ENCODE measurements at regions of chr17 and their contacts with region 1.

Region 1: DNA sequence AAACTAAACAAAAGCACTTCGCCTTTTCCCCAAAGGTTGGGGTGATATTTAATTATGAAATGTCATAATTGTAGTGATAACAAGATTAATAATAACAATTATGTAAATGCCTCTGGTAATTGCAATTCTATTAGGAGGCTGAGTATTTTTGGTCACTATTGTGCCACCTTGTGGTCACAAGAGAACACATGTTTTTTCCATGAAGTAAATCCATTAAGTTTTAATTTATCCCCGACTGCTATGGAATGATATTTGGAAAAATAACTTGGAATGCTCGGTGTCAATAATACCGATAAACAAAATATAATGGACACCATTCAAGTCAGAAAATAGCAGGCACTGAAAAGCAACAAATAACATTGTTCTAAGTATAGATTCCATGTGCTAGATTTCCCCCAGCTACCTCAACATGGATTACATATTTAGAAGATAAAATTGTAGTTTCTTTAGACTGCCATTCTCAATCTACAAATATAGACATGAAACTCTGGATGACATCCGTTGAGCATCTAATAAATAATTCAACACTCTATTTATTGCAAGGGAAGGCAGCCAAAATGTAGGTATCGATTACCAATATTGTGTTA is 25.0 kb upstream of the KCNJ2 start:
- DNase-seq: peak; percentile 15 to 50
- ATAC-seq: no peak
- H3K4me3 ChIP-seq: no peak overlapping the region
- H3K27ac ChIP-seq: no peak overlapping the region
- H3K4me1 ChIP-seq: no peaks in the 10 kb centered on the region
- CTCF ChIP-seq: peak; percentile 94
- EP300 ChIP-seq: no peak
- POLR2A ChIP-seq: no peak
- RAD21 ChIP-seq: peak; percentile 75 to 90

Region 2: GRCh38 chr17:69853541-69854224 is 290.7 kb before region 1 on chr17:
- CTCF ChIA-PET with region 1: no interaction called
- POLR2A ChIA-PET with region 1: no interaction called
- DNase-seq: no peak
- ATAC-seq: no peak
- H3K4me3 ChIP-seq: no peak overlapping the region
- H3K27ac ChIP-seq: no peak overlapping the region
- H3K4me1 ChIP-seq: peaks cover 13% of the 10 kb centered on the region
- CTCF ChIP-seq: no peak
- EP300 ChIP-seq: no peak
- POLR2A ChIP-seq: no peak
- RAD21 ChIP-seq: no peak

Region 3: GRCh38 chr17:70040336-70040735 is 104.0 kb before region 1 on chr17:
- CTCF ChIA-PET with region 1: no interaction called
- POLR2A ChIA-PET with region 1: no interaction called
- DNase-seq: no peak
- ATAC-seq: peak in 1 of 2 experiments; percentile 68; a peak in 1 of 6 replicates
- H3K4me3 ChIP-seq: no peak overlapping the region
- H3K27ac ChIP-seq: no peak overlapping the region
- H3K4me1 ChIP-seq: no peaks in the 10 kb centered on the region
- CTCF ChIP-seq: no peak
- EP300 ChIP-seq: no peak
- POLR2A ChIP-seq: no peak
- RAD21 ChIP-seq: no peak

Region 4: GRCh38 chr17:70132505-70132904 is 11.8 kb before region 1 on chr17:
- CTCF ChIA-PET with region 1: interaction called, 11 read pairs
- POLR2A ChIA-PET with region 1: no interaction called
- DNase-seq: no peak
- ATAC-seq: no peak
- H3K4me3 ChIP-seq: no peak overlapping the region
- H3K27ac ChIP-seq: no peak overlapping the region
- H3K4me1 ChIP-seq: peaks cover 27% of the 10 kb centered on the region
- CTCF ChIP-seq: no peak
- EP300 ChIP-seq: no peak
- POLR2A ChIP-seq: no peak
- RAD21 ChIP-seq: no peak

Region 5: DNA sequence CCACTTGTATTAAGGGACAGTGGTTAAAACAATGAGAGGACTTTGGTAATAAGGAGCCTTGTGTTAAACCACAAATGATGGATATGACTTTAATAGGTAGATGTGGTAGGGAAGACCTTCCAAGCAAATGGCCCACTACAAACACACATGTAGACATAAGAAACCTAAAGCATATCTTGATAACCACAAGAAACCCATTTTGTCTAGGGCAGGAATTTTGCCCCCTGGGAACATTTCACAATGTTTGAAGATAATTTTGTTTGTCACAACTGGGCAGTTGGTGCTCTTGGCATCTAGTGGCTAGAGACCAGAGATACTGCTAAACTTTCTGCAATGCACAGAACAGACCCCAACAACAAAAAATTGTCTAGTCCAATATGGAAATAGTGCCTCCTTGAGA is 50.8 kb after region 1 on chr17:
- CTCF ChIA-PET with region 1: no interaction called
- POLR2A ChIA-PET with region 1: no interaction called
- DNase-seq: no peak
- ATAC-seq: no peak
- H3K4me3 ChIP-seq: no peak overlapping the region
- H3K27ac ChIP-seq: no peak overlapping the region
- H3K4me1 ChIP-seq: no peaks in the 10 kb centered on the region
- CTCF ChIP-seq: no peak
- EP300 ChIP-seq: no peak
- POLR2A ChIP-seq: no peak
- RAD21 ChIP-seq: no peak

Measured in A549 (cell line).